ENCODE measurements at regions of chr6 and their contacts with region 1.

Region 1: GRCh38 chr6:151323791-151324487 is 67.4 kb downstream of the ZBTB2 start:
- DNase-seq: peak; percentile 79
- ATAC-seq: peak; percentile 62
- H3K4me3 Mint-ChIP-seq: no peak overlapping the region
- H3K27ac Mint-ChIP-seq: no peak overlapping the region
- H3K4me1 Mint-ChIP-seq: peaks cover 24% of the 10 kb centered on the region
- H3K27me3 Mint-ChIP-seq: peaks cover 53% of the 10 kb centered on the region

Region 2: GRCh38 chr6:150685860-150686259 is 638.1 kb before region 1 on chr6:
- CTCF ChIA-PET with region 1: no interaction called
- POLR2A ChIA-PET with region 1: no interaction called
- DNase-seq: peak; percentile 57
- ATAC-seq: peak; percentile 60
- H3K4me3 Mint-ChIP-seq: no peak overlapping the region
- H3K27ac Mint-ChIP-seq: no peak overlapping the region
- H3K4me1 Mint-ChIP-seq: peaks cover 12% of the 10 kb centered on the region
- H3K27me3 Mint-ChIP-seq: no peaks in the 10 kb centered on the region

Region 3: DNA sequence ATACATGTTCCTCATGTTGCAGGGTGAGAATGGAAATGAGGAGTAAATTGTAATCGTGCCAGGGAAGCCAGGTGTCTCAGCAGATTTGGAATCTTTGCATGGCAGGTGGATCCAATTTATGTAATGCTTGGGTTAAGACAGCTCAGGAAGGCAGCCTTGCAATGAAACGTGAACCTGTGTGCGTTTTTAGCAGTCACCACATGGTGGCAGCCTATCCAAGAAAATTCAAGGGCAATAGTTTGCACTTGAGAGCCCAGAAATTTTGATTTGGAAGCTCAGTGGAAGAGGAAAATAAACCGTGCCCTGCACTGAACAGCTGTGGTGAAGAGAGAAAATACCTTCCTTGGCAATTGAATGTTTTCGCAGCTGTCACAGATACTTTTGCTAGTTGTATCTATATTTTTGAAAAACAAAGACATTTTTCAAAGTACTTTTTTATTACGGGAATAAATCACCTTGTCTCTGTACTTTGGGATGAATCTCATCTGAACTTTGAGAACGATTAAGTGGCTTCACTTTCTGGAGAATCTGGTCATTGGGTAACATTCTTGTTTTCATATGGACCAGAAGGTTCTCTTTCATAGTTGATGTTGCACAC is 432.0 kb before region 1 on chr6:
- CTCF ChIA-PET with region 1: interaction called, 326 read pairs
- POLR2A ChIA-PET with region 1: no interaction called
- DNase-seq: peak; percentile 70
- ATAC-seq: peak; percentile 75
- H3K4me3 Mint-ChIP-seq: no peak overlapping the region
- H3K27ac Mint-ChIP-seq: no peak overlapping the region
- H3K4me1 Mint-ChIP-seq: peaks cover 28% of the 10 kb centered on the region
- H3K27me3 Mint-ChIP-seq: no peaks in the 10 kb centered on the region

Region 4: GRCh38 chr6:150915880-150916265 is 408.1 kb before region 1 on chr6:
- CTCF ChIA-PET with region 1: interaction called, 12 read pairs
- POLR2A ChIA-PET with region 1: no interaction called
- DNase-seq: no peak
- ATAC-seq: no peak
- H3K4me3 Mint-ChIP-seq: no peak overlapping the region
- H3K27ac Mint-ChIP-seq: no peak overlapping the region
- H3K4me1 Mint-ChIP-seq: no peaks in the 10 kb centered on the region
- H3K27me3 Mint-ChIP-seq: no peaks in the 10 kb centered on the region

Region 5: DNA sequence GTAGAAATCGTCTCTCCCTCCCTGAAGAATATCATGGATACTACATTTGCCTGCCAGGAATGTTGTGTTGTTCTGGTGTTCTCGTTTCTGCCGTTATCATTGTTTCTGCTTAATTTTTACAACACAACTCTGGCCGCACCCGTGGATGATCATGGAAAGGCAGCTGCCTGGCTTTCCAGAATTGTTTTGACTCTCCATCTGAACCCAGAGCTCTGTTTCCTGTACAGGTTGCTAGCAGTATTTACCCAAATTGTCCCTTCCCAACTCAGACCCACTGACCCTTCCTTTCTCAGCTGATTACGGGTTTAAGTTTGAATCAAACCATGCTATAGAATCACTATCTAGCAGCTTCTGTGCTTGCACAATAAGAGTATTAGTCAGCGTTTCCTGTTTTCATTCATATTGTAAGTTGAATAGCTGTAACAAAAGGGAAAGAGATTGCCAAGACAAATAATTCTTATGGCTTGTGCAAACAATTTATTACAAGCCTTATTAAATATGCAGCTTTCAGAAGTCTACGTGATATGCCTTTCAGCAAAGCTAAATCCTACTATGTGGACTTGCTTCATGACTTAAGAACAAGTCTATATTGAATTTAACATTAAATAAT is 319.4 kb before region 1 on chr6:
- CTCF ChIA-PET with region 1: interaction called, 18 read pairs
- POLR2A ChIA-PET with region 1: no interaction called
- DNase-seq: no peak
- ATAC-seq: no peak
- H3K4me3 Mint-ChIP-seq: no peak overlapping the region
- H3K27ac Mint-ChIP-seq: peak overlapping the region; percentile 71
- H3K4me1 Mint-ChIP-seq: peaks cover 26% of the 10 kb centered on the region
- H3K27me3 Mint-ChIP-seq: no peaks in the 10 kb centered on the region

Region 6: DNA sequence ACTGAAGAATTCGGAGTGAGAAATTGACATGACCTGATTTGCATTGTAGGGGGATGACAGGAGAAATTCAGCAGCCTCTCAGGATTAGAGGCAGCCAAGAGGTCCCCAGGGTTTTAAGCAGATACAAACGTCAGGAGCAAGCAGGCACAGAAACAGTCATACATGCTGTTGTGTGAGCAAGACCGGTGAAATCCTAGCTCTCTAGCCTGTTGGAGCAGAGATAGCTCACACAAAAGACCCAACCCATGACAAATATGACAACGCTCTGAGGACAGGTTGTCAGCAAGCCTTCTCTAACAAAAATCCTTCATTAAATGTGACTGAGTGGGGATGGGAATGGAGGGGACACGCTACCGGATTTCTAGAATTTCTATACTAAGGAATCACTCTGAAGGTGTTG is 107.1 kb before region 1 on chr6:
- CTCF ChIA-PET with region 1: no interaction called
- POLR2A ChIA-PET with region 1: no interaction called
- DNase-seq: no peak
- ATAC-seq: no peak
- H3K4me3 Mint-ChIP-seq: no peak overlapping the region
- H3K27ac Mint-ChIP-seq: no peak overlapping the region
- H3K4me1 Mint-ChIP-seq: no peaks in the 10 kb centered on the region
- H3K27me3 Mint-ChIP-seq: peaks cover 2% of the 10 kb centered on the region

Region 7: GRCh38 chr6:151290877-151291721 is 32.8 kb before region 1 on chr6:
- CTCF ChIA-PET with region 1: interaction called, 15 read pairs
- POLR2A ChIA-PET with region 1: no interaction called
- DNase-seq: no peak
- ATAC-seq: no peak
- H3K4me3 Mint-ChIP-seq: no peak overlapping the region
- H3K27ac Mint-ChIP-seq: no peak overlapping the region
- H3K4me1 Mint-ChIP-seq: peaks cover 18% of the 10 kb centered on the region
- H3K27me3 Mint-ChIP-seq: peaks cover 53% of the 10 kb centered on the region

Region 8: DNA sequence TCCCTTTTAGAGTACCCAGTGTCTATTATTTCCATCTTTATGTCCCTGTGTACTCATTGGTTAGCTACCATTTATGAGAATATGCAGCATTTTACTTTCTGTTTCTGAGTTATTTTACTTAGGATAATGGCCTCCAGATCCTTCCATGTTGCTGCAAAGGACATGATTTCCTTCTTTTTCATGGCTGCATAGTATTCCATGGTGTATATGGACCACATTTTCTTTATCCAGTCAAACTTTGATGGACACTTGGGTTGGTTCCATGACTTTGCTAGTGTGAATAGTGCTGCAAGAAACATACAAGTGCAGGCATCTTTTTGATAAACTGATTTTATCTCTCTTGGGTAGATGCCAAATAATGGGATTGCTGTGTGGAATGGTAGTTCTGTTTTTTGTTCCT is 12.0 kb after region 1 on chr6:
- CTCF ChIA-PET with region 1: interaction called, 73 read pairs
- POLR2A ChIA-PET with region 1: no interaction called
- DNase-seq: no peak
- ATAC-seq: no peak
- H3K4me3 Mint-ChIP-seq: no peak overlapping the region
- H3K27ac Mint-ChIP-seq: no peak overlapping the region
- H3K4me1 Mint-ChIP-seq: no peaks in the 10 kb centered on the region
- H3K27me3 Mint-ChIP-seq: peaks cover 4% of the 10 kb centered on the region

Region 9: DNA sequence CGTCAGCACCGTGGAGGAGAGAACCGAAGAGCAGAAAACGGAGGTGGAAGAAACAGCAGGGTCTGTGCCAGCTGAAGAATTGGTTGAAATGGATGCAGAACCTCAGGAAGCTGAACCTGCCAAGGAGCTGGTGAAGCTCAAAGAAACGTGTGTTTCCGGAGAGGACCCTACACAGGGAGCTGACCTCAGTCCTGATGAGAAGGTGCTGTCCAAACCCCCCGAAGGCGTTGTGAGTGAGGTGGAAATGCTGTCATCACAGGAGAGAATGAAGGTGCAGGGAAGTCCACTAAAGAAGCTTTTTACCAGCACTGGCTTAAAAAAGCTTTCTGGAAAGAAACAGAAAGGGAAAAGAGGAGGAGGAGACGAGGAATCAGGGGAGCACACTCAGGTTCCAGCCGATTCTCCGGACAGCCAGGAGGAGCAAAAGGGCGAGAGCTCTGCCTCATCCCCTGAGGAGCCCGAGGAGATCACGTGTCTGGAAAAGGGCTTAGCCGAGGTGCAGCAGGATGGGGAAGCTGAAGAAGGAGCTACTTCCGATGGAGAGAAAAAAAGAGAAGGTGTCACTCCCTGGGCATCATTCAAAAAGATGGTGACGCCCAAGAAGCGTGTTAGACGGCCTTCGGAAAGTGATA is 25.8 kb after region 1 on chr6:
- CTCF ChIA-PET with region 1: interaction called, 21 read pairs
- POLR2A ChIA-PET with region 1: no interaction called
- DNase-seq: no peak
- ATAC-seq: no peak
- H3K4me3 Mint-ChIP-seq: no peak overlapping the region
- H3K27ac Mint-ChIP-seq: no peak overlapping the region
- H3K4me1 Mint-ChIP-seq: peaks cover 1% of the 10 kb centered on the region
- H3K27me3 Mint-ChIP-seq: peaks cover 3% of the 10 kb centered on the region

Region 10: GRCh38 chr6:151422981-151423380 is 99.0 kb after region 1 on chr6:
- CTCF ChIA-PET with region 1: no interaction called
- POLR2A ChIA-PET with region 1: no interaction called
- DNase-seq: no peak
- ATAC-seq: no peak
- H3K4me3 Mint-ChIP-seq: no peak overlapping the region
- H3K27ac Mint-ChIP-seq: no peak overlapping the region
- H3K4me1 Mint-ChIP-seq: no peaks in the 10 kb centered on the region
- H3K27me3 Mint-ChIP-seq: no peaks in the 10 kb centered on the region